ENCODE measurements at regions of chr11 and their contacts with region 1.

Region 1: GRCh38 chr11:72781313-72782050 is 12.4 kb downstream of the STARD10 start:
- DNase-seq: peak; percentile 41
- H3K4me3 Mint-ChIP-seq: peak overlapping the region; percentile 82
- H3K27ac Mint-ChIP-seq: peak overlapping the region; percentile 56
- H3K4me1 Mint-ChIP-seq: peaks cover 30% of the 10 kb centered on the region
- H3K27me3 Mint-ChIP-seq: no peaks in the 10 kb centered on the region
- CTCF ChIP-seq: no peak

Region 2: DNA sequence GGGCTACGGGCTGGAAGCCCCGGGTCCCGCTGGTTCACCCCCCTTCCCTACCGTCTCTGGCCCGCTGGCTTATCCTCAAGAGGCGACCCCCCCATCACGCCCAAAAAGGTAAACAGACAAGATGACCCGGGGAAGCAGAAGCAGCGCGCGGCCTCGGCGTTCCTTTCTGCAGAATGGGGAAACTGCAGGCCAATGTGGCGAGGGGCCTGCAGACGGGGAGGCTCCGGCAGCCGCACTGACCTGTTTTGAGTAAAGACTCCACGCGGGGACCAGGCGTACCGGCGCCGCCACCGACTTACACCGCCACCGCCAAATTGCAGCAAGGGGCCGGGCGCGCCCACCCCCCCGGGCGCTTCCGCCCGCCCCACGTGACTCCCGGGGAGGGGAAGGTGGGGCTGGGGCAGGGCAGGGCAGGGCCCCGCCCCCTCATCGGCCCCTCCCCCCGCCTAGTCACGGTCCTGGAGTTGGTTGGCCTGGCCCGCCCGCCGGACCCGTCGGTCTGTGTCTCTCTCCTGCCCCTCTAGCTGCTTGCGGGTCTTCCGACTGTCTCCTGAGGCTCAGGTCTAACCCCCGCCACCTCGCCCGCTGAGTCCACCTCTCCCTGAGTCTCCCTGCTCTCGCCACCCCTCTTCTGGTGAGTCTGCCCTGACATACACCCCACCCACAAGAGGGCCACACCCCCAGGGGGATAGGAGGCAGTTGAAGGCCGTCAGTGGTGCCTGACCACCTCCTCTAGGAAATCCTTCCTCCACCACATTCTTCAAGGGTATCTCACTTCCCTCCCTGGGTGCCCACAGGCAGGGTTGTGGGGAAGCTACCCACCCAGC is 29.2 kb before region 1 on chr11 and contains the start of gene ARAP1:
- CTCF ChIA-PET with region 1: no interaction called
- intact Hi-C with region 1: no loop called
- DNase-seq: peak; percentile 73
- H3K4me3 Mint-ChIP-seq: peak within 1 kb of the TSS; percentile 78
- H3K27ac Mint-ChIP-seq: peak within 1 kb of the TSS; percentile 92
- H3K4me1 Mint-ChIP-seq: peaks cover 21% of the 10 kb centered on the region
- H3K27me3 Mint-ChIP-seq: no peaks in the 10 kb centered on the region
- CTCF ChIP-seq: no peak
- total RNA-seq, gene ARAP1: 53.0 and 61.3 TPM in 2 replicates

Region 3: GRCh38 chr11:72793425-72794367 is 12.2 kb after region 1 on chr11 and contains the start of gene STARD10:
- CTCF ChIA-PET with region 1: interaction called, 15 read pairs
- intact Hi-C with region 1: no loop called
- DNase-seq: peak; percentile 93
- H3K4me3 Mint-ChIP-seq: peak within 1 kb of the TSS; percentile 92
- H3K27ac Mint-ChIP-seq: peak within 1 kb of the TSS; percentile 89
- H3K4me1 Mint-ChIP-seq: peaks cover 26% of the 10 kb centered on the region
- H3K27me3 Mint-ChIP-seq: no peaks in the 10 kb centered on the region
- CTCF ChIP-seq: peak; percentile 94
- total RNA-seq, gene STARD10: 55.1 and 68.9 TPM in 2 replicates

Region 4: DNA sequence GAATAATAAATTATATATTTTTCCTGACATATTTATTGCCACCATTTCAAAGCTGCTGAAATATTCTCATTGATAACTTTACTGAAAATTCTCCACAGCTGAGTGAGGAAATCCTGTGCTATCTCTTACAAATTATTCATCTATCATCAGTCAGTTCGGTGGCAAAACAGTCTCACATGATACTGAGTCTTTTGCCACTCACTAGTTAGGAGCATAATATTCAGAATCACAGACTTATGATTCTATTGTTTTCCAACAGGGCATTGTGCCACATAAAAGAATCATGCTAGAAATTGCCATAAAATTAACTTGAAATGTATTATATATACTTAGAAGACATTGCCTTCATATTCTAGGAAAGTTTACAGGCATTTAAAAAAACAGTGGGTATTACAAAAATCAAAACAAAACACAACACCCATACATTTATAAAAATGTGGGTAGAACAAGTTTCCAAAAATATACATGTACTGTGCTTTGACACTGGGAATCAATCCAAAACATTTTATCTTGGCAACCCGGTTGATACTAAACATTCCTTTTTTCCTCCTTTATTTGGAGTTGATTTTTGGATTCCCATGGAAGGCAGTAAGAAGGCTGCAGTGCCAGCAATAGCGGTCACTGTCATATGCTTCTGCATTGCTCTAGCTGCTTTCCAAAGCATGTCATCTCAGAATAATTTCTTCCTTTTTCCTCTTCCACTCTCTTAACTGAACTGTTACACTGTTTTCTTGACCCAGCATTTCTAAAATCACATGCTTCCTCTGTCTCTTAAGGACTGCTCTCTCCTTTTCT is 75.3 kb after region 1 on chr11:
- CTCF ChIA-PET with region 1: no interaction called
- intact Hi-C with region 1: no loop called
- DNase-seq: no peak
- H3K4me3 Mint-ChIP-seq: no peak overlapping the region
- H3K27ac Mint-ChIP-seq: no peak overlapping the region
- H3K4me1 Mint-ChIP-seq: no peaks in the 10 kb centered on the region
- H3K27me3 Mint-ChIP-seq: no peaks in the 10 kb centered on the region
- CTCF ChIP-seq: no peak

Region 5: GRCh38 chr11:73001615-73002014 is 220.1 kb after region 1 on chr11:
- CTCF ChIA-PET with region 1: no interaction called
- intact Hi-C with region 1: no loop called
- DNase-seq: peak; percentile 30
- H3K4me3 Mint-ChIP-seq: no peak overlapping the region
- H3K27ac Mint-ChIP-seq: no peak overlapping the region
- H3K4me1 Mint-ChIP-seq: peaks cover 23% of the 10 kb centered on the region
- H3K27me3 Mint-ChIP-seq: no peaks in the 10 kb centered on the region
- CTCF ChIP-seq: no peak

Measured in Calu3 (cell line).